ENCODE measurements at regions of chr2 and their contacts with region 1.

Region 1: GRCh38 chr2:42296226-42296625 is 64.8 kb downstream of the COX7A2L start:
- DNase-seq: peak in 2 of 9 experiments; percentile 25 to 40
- ATAC-seq: no peak
- H3K4me3 ChIP-seq: no peak overlapping the region
- H3K4me3 Mint-ChIP-seq: peak overlapping the region; percentile 3
- H3K27ac ChIP-seq: peak overlapping the region in 1 of 2 experiments; percentile 65
- H3K27ac Mint-ChIP-seq: peak overlapping the region; percentile 33
- H3K4me1 ChIP-seq: peaks cover 41% of the 10 kb centered on the region
- H3K4me1 Mint-ChIP-seq: peaks cover 55% of the 10 kb centered on the region
- H3K27me3 ChIP-seq: no peaks in the 10 kb centered on the region
- H3K27me3 Mint-ChIP-seq: no peaks in the 10 kb centered on the region
- CTCF ChIP-seq: no peak

Region 2: GRCh38 chr2:42256505-42256904 is 39.7 kb before region 1 on chr2:
- CTCF ChIA-PET with region 1: interaction called, 3 read pairs
- POLR2A ChIA-PET with region 1: no interaction called
- intact Hi-C with region 1: loop called (anchors 5 to 10 kb)
- DNase-seq: peak in 1 of 9 experiments; percentile 38
- ATAC-seq: no peak
- H3K4me3 ChIP-seq: no peak overlapping the region
- H3K4me3 Mint-ChIP-seq: no peak overlapping the region
- H3K27ac ChIP-seq: peak overlapping the region in 1 of 2 experiments; percentile 42
- H3K27ac Mint-ChIP-seq: no peak overlapping the region
- H3K4me1 ChIP-seq: peaks cover 29% of the 10 kb centered on the region
- H3K4me1 Mint-ChIP-seq: peaks cover 57% of the 10 kb centered on the region
- H3K27me3 ChIP-seq: no peaks in the 10 kb centered on the region
- H3K27me3 Mint-ChIP-seq: no peaks in the 10 kb centered on the region
- CTCF ChIP-seq: no peak

Region 3: DNA sequence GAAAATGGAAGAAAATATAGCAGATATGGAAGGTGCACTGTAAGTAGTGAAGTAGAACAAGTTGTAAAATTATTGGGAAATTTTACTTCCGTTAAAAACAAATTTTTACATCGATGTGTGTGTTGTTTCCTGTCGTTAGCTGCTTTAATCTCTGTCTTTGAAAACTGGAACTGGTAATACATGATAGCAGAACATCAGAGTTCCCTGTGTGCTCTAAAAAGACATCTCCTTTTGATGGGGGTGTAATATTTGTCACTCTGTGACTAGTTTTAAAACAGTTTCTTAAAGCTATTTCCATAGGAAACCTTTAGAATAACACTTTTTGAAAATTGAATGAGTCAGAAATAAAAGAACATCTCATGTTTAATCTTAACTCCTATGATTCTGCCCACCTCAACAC is 21.3 kb after region 1 on chr2:
- CTCF ChIA-PET with region 1: no interaction called
- POLR2A ChIA-PET with region 1: no interaction called
- intact Hi-C with region 1: loop called in 1 of 2 experiments (anchors 2 kb)
- DNase-seq: no peak
- ATAC-seq: peak; percentile 13
- H3K4me3 ChIP-seq: no peak overlapping the region
- H3K4me3 Mint-ChIP-seq: no peak overlapping the region
- H3K27ac ChIP-seq: no peak overlapping the region
- H3K27ac Mint-ChIP-seq: peak overlapping the region; percentile 62
- H3K4me1 ChIP-seq: no peaks in the 10 kb centered on the region
- H3K4me1 Mint-ChIP-seq: peaks cover 41% of the 10 kb centered on the region
- H3K27me3 ChIP-seq: no peaks in the 10 kb centered on the region
- H3K27me3 Mint-ChIP-seq: no peaks in the 10 kb centered on the region
- CTCF ChIP-seq: no peak